ENCODE measurements at regions of chr2 and their contacts with region 1.

Region 1: GRCh38 chr2:221573430-221574230 is 1.5 kb upstream of the EPHA4 start:
- DNase-seq: peak; percentile 92 to 98
- H3K4me3 ChIP-seq: peak overlapping the region; percentile 60
- H3K4me3 Mint-ChIP-seq: peak overlapping the region; percentile 81
- H3K27ac Mint-ChIP-seq: peak overlapping the region; percentile 38
- H3K4me1 ChIP-seq: peaks cover 31% of the 10 kb centered on the region
- H3K4me1 Mint-ChIP-seq: peaks cover 46% of the 10 kb centered on the region
- H3K27me3 ChIP-seq: no peaks in the 10 kb centered on the region
- H3K27me3 Mint-ChIP-seq: no peaks in the 10 kb centered on the region
- CTCF ChIP-seq: peak; percentile 97 to 99

Region 2: GRCh38 chr2:219736209-219736608 is 1837.4 kb before region 1 on chr2:
- CTCF ChIA-PET with region 1: no interaction called
- POLR2A ChIA-PET with region 1: no interaction called
- intact Hi-C with region 1: loop called (anchors 2 kb)
- DNase-seq: peak in 1 of 2 experiments; percentile 63
- H3K4me3 ChIP-seq: no peak overlapping the region
- H3K4me3 Mint-ChIP-seq: no peak overlapping the region
- H3K27ac Mint-ChIP-seq: no peak overlapping the region
- H3K4me1 ChIP-seq: no peaks in the 10 kb centered on the region
- H3K4me1 Mint-ChIP-seq: no peaks in the 10 kb centered on the region
- H3K27me3 ChIP-seq: no peaks in the 10 kb centered on the region; the same call in 1 of the 2 replicates
- H3K27me3 Mint-ChIP-seq: peaks cover 21% of the 10 kb centered on the region
- CTCF ChIP-seq: peak; percentile 40 to 65

Region 3: GRCh38 chr2:221034973-221035372 is 538.7 kb before region 1 on chr2:
- CTCF ChIA-PET with region 1: no interaction called
- POLR2A ChIA-PET with region 1: no interaction called
- intact Hi-C with region 1: loop called (anchors 1 kb)
- DNase-seq: no peak
- H3K4me3 ChIP-seq: no peak overlapping the region
- H3K4me3 Mint-ChIP-seq: no peak overlapping the region
- H3K27ac Mint-ChIP-seq: no peak overlapping the region
- H3K4me1 ChIP-seq: peaks cover 9% of the 10 kb centered on the region
- H3K4me1 Mint-ChIP-seq: no peaks in the 10 kb centered on the region
- H3K27me3 ChIP-seq: no peaks in the 10 kb centered on the region; the same call in 1 of the 2 replicates
- H3K27me3 Mint-ChIP-seq: peaks cover 2% of the 10 kb centered on the region
- CTCF ChIP-seq: no peak

Region 4: DNA sequence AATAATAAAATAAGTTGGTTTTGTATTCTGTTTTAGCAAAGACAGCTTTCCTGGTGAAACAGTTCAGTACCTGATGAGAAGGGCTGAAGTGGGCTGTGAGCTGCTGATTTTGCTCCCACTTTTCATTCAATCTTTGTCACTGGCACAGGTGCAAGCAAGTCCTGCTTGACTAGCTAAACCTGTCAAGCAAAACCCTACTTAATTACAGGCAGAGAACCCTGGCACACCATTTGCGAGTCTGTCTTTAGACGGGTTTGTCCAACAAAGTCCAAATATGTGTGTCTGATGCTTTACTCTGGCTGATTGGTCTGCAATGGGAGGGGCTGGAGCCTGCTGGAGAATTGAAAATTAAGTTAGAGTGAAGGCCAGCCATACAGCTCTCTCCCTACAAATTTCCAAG is 268.7 kb before region 1 on chr2:
- CTCF ChIA-PET with region 1: no interaction called
- POLR2A ChIA-PET with region 1: no interaction called
- intact Hi-C with region 1: loop called (anchors 2 kb)
- DNase-seq: no peak
- H3K4me3 ChIP-seq: no peak overlapping the region
- H3K4me3 Mint-ChIP-seq: no peak overlapping the region
- H3K27ac Mint-ChIP-seq: no peak overlapping the region
- H3K4me1 ChIP-seq: no peaks in the 10 kb centered on the region
- H3K4me1 Mint-ChIP-seq: peaks cover 4% of the 10 kb centered on the region
- H3K27me3 ChIP-seq: no peaks in the 10 kb centered on the region
- H3K27me3 Mint-ChIP-seq: no peaks in the 10 kb centered on the region
- CTCF ChIP-seq: no peak

Region 5: DNA sequence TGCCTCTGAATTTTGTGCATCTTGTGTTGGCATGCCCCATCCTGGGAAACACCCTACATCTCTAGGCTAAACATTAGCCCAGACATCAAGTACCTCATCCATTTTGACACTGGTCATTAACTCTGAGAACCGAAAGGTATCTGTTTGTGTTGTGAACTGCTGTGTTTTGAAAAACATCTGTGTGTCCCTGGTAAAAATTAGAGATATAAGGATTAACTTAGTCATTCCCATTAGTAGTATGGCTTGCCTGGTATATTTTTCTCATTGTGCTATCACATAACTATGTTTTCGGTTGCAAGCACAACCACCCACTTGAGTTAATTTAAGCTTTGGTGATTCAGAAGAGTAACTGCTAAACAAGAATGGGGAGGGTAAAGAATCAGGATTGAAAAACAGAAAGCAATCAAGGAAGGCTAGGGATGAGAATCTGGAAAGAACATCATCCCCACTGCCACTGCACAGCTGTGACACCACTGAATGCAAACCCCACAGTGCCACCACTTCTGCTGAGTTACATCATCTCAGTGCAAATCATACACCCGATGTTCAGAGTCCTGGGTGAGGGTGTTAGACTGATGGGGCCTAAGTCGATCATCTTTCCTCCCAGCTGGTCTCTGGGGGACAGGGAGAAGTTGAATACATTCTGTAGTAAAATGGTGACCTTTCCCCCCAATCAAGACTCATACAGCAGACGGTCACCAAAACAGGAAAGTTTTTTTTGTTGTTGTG is 235.5 kb before region 1 on chr2:
- CTCF ChIA-PET with region 1: no interaction called
- POLR2A ChIA-PET with region 1: no interaction called
- intact Hi-C with region 1: no loop called
- DNase-seq: no peak
- H3K4me3 ChIP-seq: no peak overlapping the region
- H3K4me3 Mint-ChIP-seq: no peak overlapping the region
- H3K27ac Mint-ChIP-seq: no peak overlapping the region
- H3K4me1 ChIP-seq: no peaks in the 10 kb centered on the region
- H3K4me1 Mint-ChIP-seq: no peaks in the 10 kb centered on the region
- H3K27me3 ChIP-seq: no peaks in the 10 kb centered on the region
- H3K27me3 Mint-ChIP-seq: peaks cover 5% of the 10 kb centered on the region
- CTCF ChIP-seq: no peak

Region 6: GRCh38 chr2:221447310-221447709 is 126.3 kb before region 1 on chr2:
- CTCF ChIA-PET with region 1: interaction called, 3 read pairs
- POLR2A ChIA-PET with region 1: interaction called, 3 read pairs
- intact Hi-C with region 1: loop called (anchors 1 kb)
- DNase-seq: peak; percentile 73 to 74
- H3K4me3 ChIP-seq: no peak overlapping the region
- H3K4me3 Mint-ChIP-seq: peak overlapping the region; percentile 55
- H3K27ac Mint-ChIP-seq: peak overlapping the region; percentile 65
- H3K4me1 ChIP-seq: peaks cover 21% of the 10 kb centered on the region
- H3K4me1 Mint-ChIP-seq: peaks cover 21% of the 10 kb centered on the region
- H3K27me3 ChIP-seq: no peaks in the 10 kb centered on the region
- H3K27me3 Mint-ChIP-seq: no peaks in the 10 kb centered on the region
- CTCF ChIP-seq: no peak

Region 7: DNA sequence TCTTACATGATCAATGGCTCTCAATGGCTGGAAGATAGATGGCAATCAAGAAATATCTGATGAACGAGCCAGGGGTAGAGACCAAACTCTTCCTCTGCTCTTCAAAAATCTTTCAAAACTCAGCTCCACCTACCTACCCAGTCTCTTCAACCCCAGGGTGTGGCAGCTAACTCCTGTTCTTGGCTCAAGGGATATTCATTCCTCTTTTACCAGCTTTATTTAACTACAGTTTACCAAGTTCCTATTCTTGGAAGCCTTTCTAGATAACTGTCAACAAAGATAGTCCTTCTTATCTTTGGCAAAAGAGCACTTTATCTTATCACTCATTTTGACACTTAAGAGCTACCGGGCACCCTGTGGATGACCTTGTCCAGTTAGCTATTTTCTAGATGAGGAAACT is 37.8 kb before region 1 on chr2:
- CTCF ChIA-PET with region 1: interaction called, 22 read pairs
- POLR2A ChIA-PET with region 1: no interaction called
- intact Hi-C with region 1: loop called (anchors 1 kb)
- DNase-seq: peak; percentile 83 to 84
- H3K4me3 ChIP-seq: no peak overlapping the region
- H3K4me3 Mint-ChIP-seq: peak overlapping the region; percentile 30
- H3K27ac Mint-ChIP-seq: peak overlapping the region; percentile 23
- H3K4me1 ChIP-seq: peaks cover 58% of the 10 kb centered on the region
- H3K4me1 Mint-ChIP-seq: peaks cover 60% of the 10 kb centered on the region
- H3K27me3 ChIP-seq: no peaks in the 10 kb centered on the region
- H3K27me3 Mint-ChIP-seq: no peaks in the 10 kb centered on the region
- CTCF ChIP-seq: no peak

Region 8: DNA sequence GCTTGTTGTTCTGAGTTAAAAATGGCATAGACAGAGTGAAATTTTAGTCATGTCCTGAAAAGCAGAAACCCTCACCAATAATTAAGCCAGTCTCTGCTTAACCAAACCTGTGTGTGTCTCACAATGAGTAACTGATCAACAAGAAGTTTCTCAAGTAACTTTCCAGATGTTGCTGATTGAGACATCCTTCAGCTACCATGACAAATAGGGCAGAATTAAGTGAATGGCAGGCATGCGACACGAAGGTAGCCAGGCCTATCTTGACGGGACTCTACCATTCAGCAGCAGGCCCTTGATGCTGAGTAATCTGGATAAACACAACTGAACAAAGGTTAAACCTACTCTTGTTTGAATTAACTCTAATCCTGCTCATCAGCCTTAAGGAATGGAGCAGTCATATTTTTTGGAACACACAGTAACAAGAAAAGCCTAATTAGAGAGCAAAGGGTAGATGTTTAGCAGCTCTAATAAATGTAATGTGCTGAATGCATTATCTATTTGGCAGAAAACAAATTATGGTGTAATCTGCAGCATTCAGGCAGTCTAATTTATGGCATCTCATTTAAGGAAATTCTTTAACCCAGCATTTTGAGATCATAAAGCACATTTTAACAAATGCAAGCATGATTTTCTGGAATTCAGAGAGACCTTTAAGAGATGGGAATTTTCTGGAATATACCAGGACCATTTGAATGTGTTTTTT is 158.0 kb after region 1 on chr2:
- CTCF ChIA-PET with region 1: no interaction called
- POLR2A ChIA-PET with region 1: no interaction called
- intact Hi-C with region 1: loop called (anchors 2 kb)
- DNase-seq: peak; percentile 83 to 90
- H3K4me3 ChIP-seq: no peak overlapping the region
- H3K4me3 Mint-ChIP-seq: peak overlapping the region; percentile 48
- H3K27ac Mint-ChIP-seq: peak overlapping the region; percentile 89
- H3K4me1 ChIP-seq: peaks cover 26% of the 10 kb centered on the region
- H3K4me1 Mint-ChIP-seq: peaks cover 23% of the 10 kb centered on the region
- H3K27me3 ChIP-seq: no peaks in the 10 kb centered on the region
- H3K27me3 Mint-ChIP-seq: no peaks in the 10 kb centered on the region
- CTCF ChIP-seq: no peak